ENCODE measurements at regions of chr19 and their contacts with region 1.

Region 1: DNA sequence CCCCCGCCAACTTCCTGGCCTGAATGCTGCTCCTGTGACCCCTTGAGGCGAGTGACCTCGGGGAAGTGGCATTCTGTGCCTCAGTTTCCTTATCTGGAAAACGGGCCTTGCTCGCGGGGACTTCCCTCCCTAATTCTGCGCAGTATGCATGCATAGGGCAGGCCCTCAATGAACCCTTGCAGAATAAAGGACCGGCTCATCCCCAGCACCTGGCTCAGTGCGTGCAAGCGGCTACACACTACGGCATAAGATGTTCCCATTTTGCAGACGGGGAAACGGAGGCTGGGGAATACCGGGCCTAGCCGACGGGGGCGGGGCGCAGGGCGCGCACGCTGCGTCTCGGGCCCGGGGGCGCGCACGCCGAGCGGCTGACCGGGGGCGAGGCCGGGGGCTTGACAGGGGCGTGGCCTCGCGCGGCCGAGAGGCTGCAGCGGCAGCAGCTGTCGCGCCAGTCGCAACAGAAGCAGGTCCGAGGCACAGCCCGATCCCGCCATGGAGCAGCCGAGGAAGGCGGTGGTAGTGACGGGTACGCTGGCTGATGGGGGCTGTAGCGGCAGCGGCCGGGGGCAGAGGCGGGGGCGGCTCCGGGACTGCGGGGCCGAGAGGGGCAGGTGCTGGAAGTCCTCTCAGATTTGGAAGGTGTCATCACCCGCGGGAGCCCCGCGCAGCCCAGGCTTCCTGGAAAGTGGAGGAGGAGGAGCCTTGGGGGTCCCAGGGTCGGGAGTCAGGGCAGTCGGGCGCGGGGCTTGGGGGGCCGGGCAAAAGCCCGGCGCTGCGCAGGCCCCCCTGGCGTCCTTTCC is at the start of gene PGPEP1:
- DNase-seq: peak in 1 of 2 experiments; percentile 38
- ATAC-seq: peak; percentile 60; a peak in 5 of 6 replicates
- H3K4me3 ChIP-seq: peak within 1 kb of the TSS; percentile 60
- H3K27ac ChIP-seq: peak within 1 kb of the TSS; percentile 69 to 87
- H3K4me1 ChIP-seq: peaks cover 12% of the 10 kb centered on the region
- CTCF ChIP-seq: no peak
- EP300 ChIP-seq: no peak
- POLR2A ChIP-seq: no peak; the same call in 1 of the 2 replicates
- RAD21 ChIP-seq: no peak
- polyA plus RNA-seq, gene PGPEP1: 7.1 and 8.6 TPM in 2 replicates

Region 2: GRCh38 chr19:18328340-18329034 is 11.9 kb before region 1 on chr19:
- CTCF ChIA-PET with region 1: interaction called, 42 read pairs
- POLR2A ChIA-PET with region 1: interaction called, 3 read pairs
- DNase-seq: peak; percentile 94 to 99
- ATAC-seq: peak; percentile 99
- H3K4me3 ChIP-seq: peak overlapping the region; percentile 30
- H3K27ac ChIP-seq: peak overlapping the region; percentile 67 to 83
- H3K4me1 ChIP-seq: peaks cover 27% of the 10 kb centered on the region
- CTCF ChIP-seq: peak; percentile 67
- EP300 ChIP-seq: no peak
- POLR2A ChIP-seq: peak; percentile 32; the same call in 1 of the 2 replicates
- RAD21 ChIP-seq: peak; percentile 73

Region 3: GRCh38 chr19:18373892-18374629 is 33.7 kb after region 1 on chr19:
- CTCF ChIA-PET with region 1: no interaction called
- POLR2A ChIA-PET with region 1: no interaction called
- DNase-seq: peak; percentile 74 to 94
- ATAC-seq: peak; percentile 87 to 92
- H3K4me3 ChIP-seq: 0 out of 3 replicates have a peak overlapping the region, but pooled peaks have one; percentile 12
- H3K27ac ChIP-seq: peak overlapping the region; percentile 99 to 100
- H3K4me1 ChIP-seq: peaks cover 62% of the 10 kb centered on the region
- CTCF ChIP-seq: no peak
- EP300 ChIP-seq: peak; percentile 79 to 95; a peak in 3 of 5 replicates
- POLR2A ChIP-seq: no peak
- RAD21 ChIP-seq: 0 out of 5 replicates have a peak, but pooled peaks of 1 of the 2 experiments have one; percentile 19

Region 4: GRCh38 chr19:18408053-18408476 is 67.7 kb after region 1 on chr19:
- CTCF ChIA-PET with region 1: interaction called, 14 read pairs
- POLR2A ChIA-PET with region 1: no interaction called
- DNase-seq: no peak
- ATAC-seq: peak in 1 of 2 experiments; percentile 33; a peak in 1 of 6 replicates
- H3K4me3 ChIP-seq: no peak overlapping the region
- H3K27ac ChIP-seq: peak overlapping the region in 1 of 2 experiments; percentile 87; a peak in 3 of 6 replicates
- H3K4me1 ChIP-seq: peaks cover 11% of the 10 kb centered on the region; the same call in 2 of the 3 replicates
- CTCF ChIP-seq: 0 out of 3 replicates have a peak, but pooled peaks have one; percentile 18
- EP300 ChIP-seq: no peak
- POLR2A ChIP-seq: no peak
- RAD21 ChIP-seq: peak; percentile 18 to 46; a peak in 2 of 5 replicates

Measured in A549 (cell line).